Left cardiac atrium (tissue), 4 donors: ENCODE measurements at regions of chr18 and their contacts with region 1.

Region 1: DNA sequence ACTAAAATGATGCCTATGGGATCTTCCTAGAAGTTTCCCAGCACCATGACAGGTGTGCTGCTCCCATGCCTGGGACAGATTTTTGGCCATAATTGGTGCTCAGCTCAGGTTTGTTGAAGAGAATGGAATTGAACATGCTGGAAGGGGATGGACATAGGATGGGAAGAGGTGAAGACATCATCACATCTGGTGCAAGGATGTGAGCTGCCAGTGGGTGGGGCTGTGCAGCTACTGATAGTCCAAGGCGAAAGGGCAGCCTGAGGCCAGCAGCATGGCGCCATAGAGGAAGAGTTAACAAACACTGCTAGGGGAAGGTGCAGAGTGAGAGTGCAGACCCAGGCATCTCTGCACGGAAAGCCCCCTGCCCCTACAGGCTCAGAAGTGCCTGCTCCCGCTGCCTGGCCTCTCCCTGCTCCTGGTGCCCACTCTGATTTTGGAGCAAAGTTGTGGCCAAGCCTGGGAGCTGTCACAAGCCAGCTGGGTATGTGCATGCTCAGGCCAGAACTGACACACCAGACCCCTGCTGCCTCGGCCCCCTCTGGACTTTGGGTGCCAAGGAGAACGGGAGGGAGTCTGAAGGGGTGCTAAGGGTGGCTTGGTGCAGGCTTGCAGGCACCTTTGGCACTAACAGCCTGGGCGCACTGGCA is 178.6 kb downstream of the ZBTB7C start:
- DNase-seq: peak; percentile 71
- ATAC-seq: peak; percentile 71 to 73

Region 2: DNA sequence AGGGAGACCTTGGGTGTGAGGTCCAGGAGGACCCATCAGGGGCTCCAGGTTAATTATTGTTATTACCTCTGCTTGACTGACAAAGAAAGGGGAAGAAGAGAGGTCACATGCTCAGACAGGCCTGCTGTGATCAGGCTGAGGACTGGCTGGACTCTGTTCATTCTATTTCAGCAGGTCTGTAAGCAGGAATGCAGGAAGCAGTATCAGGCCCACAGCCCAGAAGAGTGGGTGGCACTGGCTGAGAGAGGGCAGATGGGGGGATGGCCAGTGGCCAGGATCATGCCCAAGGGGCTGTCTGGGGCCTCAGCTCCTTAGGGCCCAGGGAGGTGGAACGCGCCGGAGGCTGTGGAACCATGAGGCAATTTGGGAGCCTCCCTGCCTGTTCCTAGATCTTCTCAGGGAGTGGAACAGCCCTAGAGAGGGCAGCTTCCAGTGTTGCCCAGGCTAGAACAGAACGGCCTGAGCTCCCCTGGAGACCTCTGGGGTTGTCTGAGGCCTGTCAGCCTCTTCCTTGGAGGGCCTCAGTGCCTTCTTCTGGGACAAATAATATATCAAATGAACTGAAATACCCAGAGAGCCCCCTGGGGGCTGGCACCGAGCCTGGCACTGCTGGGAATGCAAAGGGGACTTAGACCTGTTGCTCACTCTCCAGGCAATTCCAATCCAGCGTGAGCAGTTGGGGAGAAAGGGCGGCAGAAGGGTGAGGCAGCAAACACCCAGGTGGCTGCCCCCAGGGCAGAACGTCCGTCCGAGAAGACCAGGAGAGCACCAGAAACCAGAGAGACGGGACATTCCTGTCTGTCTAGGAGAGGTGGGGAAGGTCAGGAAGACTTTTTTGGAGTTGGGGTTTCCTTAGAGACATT is 222.5 kb after region 1 on chr18:
- intact Hi-C with region 1: loop called in 1 of 2 experiments (anchors 5 kb)
- DNase-seq: no peak
- ATAC-seq: peak; percentile 57 to 59